CD8-positive, alpha-beta T cell (primary cell): ENCODE measurements at regions of chr20 and their contacts with region 1.

Region 1: GRCh38 chr20:35735828-35736470 is 6.1 kb downstream of the RBM39 start:
- DNase-seq: no peak
- ATAC-seq: no peak
- H3K4me3 ChIP-seq: peak overlapping the region in 1 of 2 experiments; percentile 10
- H3K4me3 Mint-ChIP-seq: peak overlapping the region; percentile 64
- H3K27ac ChIP-seq: peak overlapping the region in 1 of 2 experiments; percentile 37
- H3K27ac Mint-ChIP-seq: peak overlapping the region; percentile 69
- H3K4me1 ChIP-seq: peaks cover 85% of the 10 kb centered on the region
- H3K4me1 Mint-ChIP-seq: peaks cover 72% of the 10 kb centered on the region
- H3K27me3 ChIP-seq: no peaks in the 10 kb centered on the region
- H3K27me3 Mint-ChIP-seq: no peaks in the 10 kb centered on the region
- CTCF ChIP-seq: no peak

Region 2: DNA sequence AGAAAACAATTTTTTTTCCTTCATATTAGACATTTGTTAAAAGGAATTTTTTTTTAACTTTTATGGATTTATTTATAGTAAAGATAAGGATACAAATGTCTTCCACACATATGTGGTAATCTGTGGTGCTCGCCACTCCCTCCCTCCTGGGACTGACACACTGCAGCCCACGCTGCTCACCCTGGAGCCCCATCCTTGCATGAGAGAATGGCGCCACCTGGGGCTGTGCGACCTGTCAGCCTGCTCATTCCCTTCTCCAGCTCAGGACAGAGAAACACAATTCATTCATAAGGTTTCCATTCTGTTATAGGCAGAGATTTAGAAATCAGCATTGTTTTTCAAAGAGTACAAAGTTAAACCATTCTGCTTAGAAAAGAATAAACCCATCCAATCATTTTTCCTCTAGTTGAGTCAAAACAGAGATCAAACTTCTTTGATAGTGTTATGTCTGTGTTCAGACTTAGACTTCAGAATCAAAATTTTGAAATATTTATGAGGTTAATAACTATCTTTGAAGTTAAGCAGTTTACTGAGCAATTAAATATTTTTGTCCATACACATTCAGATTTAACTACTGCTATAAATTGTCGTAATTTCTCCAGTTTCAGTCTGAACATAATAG is 1262.6 kb before region 1 on chr20:
- CTCF ChIA-PET with region 1: no interaction called
- POLR2A ChIA-PET with region 1: no interaction called
- intact Hi-C with region 1: no loop called
- DNase-seq: peak in 5 of 9 experiments; percentile 20 to 51 (median 37)
- ATAC-seq: peak; percentile 57
- H3K4me3 ChIP-seq: no peak overlapping the region
- H3K4me3 Mint-ChIP-seq: no peak overlapping the region
- H3K27ac ChIP-seq: no peak overlapping the region
- H3K27ac Mint-ChIP-seq: no peak overlapping the region
- H3K4me1 ChIP-seq: no peaks in the 10 kb centered on the region
- H3K4me1 Mint-ChIP-seq: peaks cover 8% of the 10 kb centered on the region
- H3K27me3 ChIP-seq: no peaks in the 10 kb centered on the region
- H3K27me3 Mint-ChIP-seq: no peaks in the 10 kb centered on the region
- CTCF ChIP-seq: no peak

Region 3: GRCh38 chr20:34595377-34596184 is 1140.4 kb before region 1 on chr20:
- CTCF ChIA-PET with region 1: no interaction called
- POLR2A ChIA-PET with region 1: no interaction called
- intact Hi-C with region 1: no loop called
- DNase-seq: no peak
- ATAC-seq: no peak
- H3K4me3 ChIP-seq: no peak overlapping the region
- H3K4me3 Mint-ChIP-seq: no peak overlapping the region
- H3K27ac ChIP-seq: no peak overlapping the region
- H3K27ac Mint-ChIP-seq: no peak overlapping the region
- H3K4me1 ChIP-seq: no peaks in the 10 kb centered on the region
- H3K4me1 Mint-ChIP-seq: no peaks in the 10 kb centered on the region
- H3K27me3 ChIP-seq: no peaks in the 10 kb centered on the region
- H3K27me3 Mint-ChIP-seq: no peaks in the 10 kb centered on the region
- CTCF ChIP-seq: no peak

Region 4: GRCh38 chr20:35704514-35705261 is 31.3 kb before region 1 on chr20:
- CTCF ChIA-PET with region 1: no interaction called
- POLR2A ChIA-PET with region 1: interaction called, 24 read pairs
- intact Hi-C with region 1: loop called in 1 of 2 experiments (anchors 1 kb)
- DNase-seq: no peak
- ATAC-seq: no peak
- H3K4me3 ChIP-seq: no peak overlapping the region
- H3K4me3 Mint-ChIP-seq: no peak overlapping the region
- H3K27ac ChIP-seq: no peak overlapping the region
- H3K27ac Mint-ChIP-seq: no peak overlapping the region
- H3K4me1 ChIP-seq: peaks cover 20% of the 10 kb centered on the region
- H3K4me1 Mint-ChIP-seq: peaks cover 46% of the 10 kb centered on the region
- H3K27me3 ChIP-seq: no peaks in the 10 kb centered on the region
- H3K27me3 Mint-ChIP-seq: no peaks in the 10 kb centered on the region
- CTCF ChIP-seq: no peak

Region 5: DNA sequence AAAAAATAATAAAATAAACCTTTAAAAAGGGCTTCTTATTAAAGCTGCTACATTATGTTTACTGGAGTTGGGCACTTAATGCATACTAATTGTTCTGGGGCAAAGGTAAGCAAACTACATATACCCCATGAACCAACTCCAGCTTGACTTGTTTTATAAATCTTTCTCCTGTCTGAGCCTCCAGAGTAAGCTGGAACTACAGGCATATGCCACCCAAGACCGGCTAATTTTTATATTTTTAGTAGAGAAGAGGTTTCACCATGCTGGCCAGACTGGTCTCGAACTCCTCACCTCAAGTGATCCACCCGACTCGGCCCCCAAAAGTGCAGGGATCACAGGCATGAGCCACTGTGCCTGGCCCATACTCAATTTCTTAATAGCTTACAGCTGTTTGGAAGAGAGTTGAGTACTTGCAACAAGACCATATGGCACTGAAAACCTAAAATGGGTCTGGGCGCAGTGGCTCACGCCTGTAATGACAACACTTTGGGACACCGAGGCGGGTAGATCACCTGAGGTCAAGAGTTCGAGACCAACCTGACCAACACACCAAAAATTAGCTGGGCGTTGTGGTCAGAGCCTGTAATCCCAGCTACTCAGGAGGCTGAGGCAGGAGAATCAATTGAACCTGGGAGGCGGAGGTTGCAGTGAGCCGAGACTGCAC is 16.8 kb before region 1 on chr20:
- CTCF ChIA-PET with region 1: interaction called, 4 read pairs
- POLR2A ChIA-PET with region 1: interaction called, 6 read pairs
- intact Hi-C with region 1: loop called in 1 of 2 experiments (anchors 2 kb)
- DNase-seq: no peak
- ATAC-seq: no peak
- H3K4me3 ChIP-seq: no peak overlapping the region
- H3K4me3 Mint-ChIP-seq: no peak overlapping the region
- H3K27ac ChIP-seq: no peak overlapping the region
- H3K27ac Mint-ChIP-seq: peak overlapping the region; percentile 74
- H3K4me1 ChIP-seq: peaks cover 38% of the 10 kb centered on the region
- H3K4me1 Mint-ChIP-seq: peaks cover 60% of the 10 kb centered on the region
- H3K27me3 ChIP-seq: no peaks in the 10 kb centered on the region
- H3K27me3 Mint-ChIP-seq: no peaks in the 10 kb centered on the region
- CTCF ChIP-seq: no peak

Region 6: GRCh38 chr20:35757098-35757705 is 21.3 kb after region 1 on chr20:
- CTCF ChIA-PET with region 1: no interaction called
- POLR2A ChIA-PET with region 1: no interaction called
- intact Hi-C with region 1: no loop called
- DNase-seq: no peak
- ATAC-seq: peak; percentile 38
- H3K4me3 ChIP-seq: no peak overlapping the region
- H3K4me3 Mint-ChIP-seq: no peak overlapping the region
- H3K27ac ChIP-seq: no peak overlapping the region
- H3K27ac Mint-ChIP-seq: no peak overlapping the region
- H3K4me1 ChIP-seq: no peaks in the 10 kb centered on the region
- H3K4me1 Mint-ChIP-seq: peaks cover 10% of the 10 kb centered on the region
- H3K27me3 ChIP-seq: no peaks in the 10 kb centered on the region
- H3K27me3 Mint-ChIP-seq: no peaks in the 10 kb centered on the region
- CTCF ChIP-seq: no peak

Region 7: GRCh38 chr20:36666181-36666740 is 930.3 kb after region 1 on chr20:
- CTCF ChIA-PET with region 1: no interaction called
- POLR2A ChIA-PET with region 1: no interaction called
- intact Hi-C with region 1: no loop called
- DNase-seq: peak in 2 of 9 experiments; percentile 32 to 50
- ATAC-seq: peak; percentile 55
- H3K4me3 ChIP-seq: no peak overlapping the region
- H3K4me3 Mint-ChIP-seq: no peak overlapping the region
- H3K27ac ChIP-seq: no peak overlapping the region
- H3K27ac Mint-ChIP-seq: no peak overlapping the region
- H3K4me1 ChIP-seq: no peaks in the 10 kb centered on the region
- H3K4me1 Mint-ChIP-seq: peaks cover 1% of the 10 kb centered on the region
- H3K27me3 ChIP-seq: no peaks in the 10 kb centered on the region
- H3K27me3 Mint-ChIP-seq: no peaks in the 10 kb centered on the region
- CTCF ChIP-seq: no peak